Activated naive CD4-positive, alpha-beta T cell treated with anti-CD3 and anti-CD28 coated beads, Interleukin-2, amount 10 ng/mL, durations not matched to agents 7 days and 5 days (primary cell): ENCODE measurements at regions of chr11 and their contacts with region 1.

Region 1: GRCh38 chr11:119196833-119197483 is 9.2 kb upstream of the CBL start:
- DNase-seq: peak; percentile 82
- H3K4me3 Mint-ChIP-seq: no peak overlapping the region
- H3K27ac Mint-ChIP-seq: no peak overlapping the region
- H3K4me1 Mint-ChIP-seq: peaks cover 10% of the 10 kb centered on the region
- H3K27me3 Mint-ChIP-seq: peaks cover 22% of the 10 kb centered on the region

Region 2: GRCh38 chr11:119006656-119007055 is 190.3 kb before region 1 on chr11:
- CTCF ChIA-PET with region 1: no interaction called
- DNase-seq: no peak
- H3K4me3 Mint-ChIP-seq: no peak overlapping the region
- H3K27ac Mint-ChIP-seq: no peak overlapping the region
- H3K4me1 Mint-ChIP-seq: peaks cover 3% of the 10 kb centered on the region
- H3K27me3 Mint-ChIP-seq: no peaks in the 10 kb centered on the region

Region 3: DNA sequence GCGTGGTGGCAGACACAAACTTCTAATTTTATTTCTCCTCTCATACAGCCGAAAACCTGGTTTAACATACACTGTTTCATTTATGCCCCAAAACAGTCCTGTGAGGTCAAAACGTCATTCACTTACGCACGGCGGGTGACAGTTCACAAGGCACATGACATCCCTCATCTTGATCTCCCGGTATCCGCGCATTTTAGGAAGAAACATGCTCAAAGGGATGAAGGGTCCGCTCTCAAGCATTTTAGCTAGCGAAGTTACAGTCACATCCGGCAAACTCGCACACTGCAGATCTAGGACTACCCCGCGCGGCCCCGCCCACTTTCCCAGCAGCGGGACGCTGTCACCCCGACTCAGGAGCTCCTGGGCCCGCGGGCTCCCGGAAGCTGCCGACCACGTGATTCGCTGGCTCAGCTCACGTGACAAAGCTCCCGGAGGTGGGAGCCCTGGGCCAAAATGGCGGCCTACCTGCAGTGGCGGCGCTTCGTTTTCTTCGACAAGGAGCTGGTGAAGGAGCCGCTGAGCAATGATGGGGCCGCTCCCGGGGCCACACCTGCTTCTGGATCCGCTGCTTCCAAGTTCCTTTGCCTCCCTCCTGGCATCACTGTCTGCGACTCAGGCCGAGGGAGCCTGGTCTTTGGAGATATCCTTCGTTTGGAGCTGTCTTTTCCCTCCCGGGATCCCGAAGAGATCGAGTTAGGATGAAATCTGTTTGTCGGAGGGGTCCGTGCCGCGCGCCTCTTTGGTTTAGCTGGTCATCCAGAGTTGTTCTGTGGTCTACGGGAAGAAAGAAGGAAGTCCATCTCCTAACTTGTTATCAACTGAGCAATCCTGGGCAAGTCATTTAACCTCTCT is 129.4 kb before region 1 on chr11 and contains the start of gene VPS11:
- CTCF ChIA-PET with region 1: interaction called, 11 read pairs
- DNase-seq: peak; percentile 99
- H3K4me3 Mint-ChIP-seq: peak within 1 kb of the TSS; percentile 92
- H3K27ac Mint-ChIP-seq: peak within 1 kb of the TSS; percentile 98
- H3K4me1 Mint-ChIP-seq: peaks cover 49% of the 10 kb centered on the region
- H3K27me3 Mint-ChIP-seq: no peaks in the 10 kb centered on the region

Region 4: GRCh38 chr11:119108146-119108856 is 88.7 kb before region 1 on chr11:
- CTCF ChIA-PET with region 1: interaction called, 13 read pairs
- DNase-seq: peak; percentile 67
- H3K4me3 Mint-ChIP-seq: peak overlapping the region; percentile 87
- H3K27ac Mint-ChIP-seq: peak overlapping the region; percentile 85
- H3K4me1 Mint-ChIP-seq: peaks cover 62% of the 10 kb centered on the region
- H3K27me3 Mint-ChIP-seq: peaks cover 5% of the 10 kb centered on the region

Region 5: GRCh38 chr11:119168471-119169281 is 28.3 kb before region 1 on chr11 and contains the start of gene NLRX1:
- CTCF ChIA-PET with region 1: interaction called, 13 read pairs
- DNase-seq: peak; percentile 89
- H3K4me3 Mint-ChIP-seq: peak within 1 kb of the TSS; percentile 89
- H3K27ac Mint-ChIP-seq: peak within 1 kb of the TSS; percentile 93
- H3K4me1 Mint-ChIP-seq: peaks cover 27% of the 10 kb centered on the region
- H3K27me3 Mint-ChIP-seq: peaks cover under 1% of the 10 kb centered on the region

Region 6: GRCh38 chr11:119229288-119229672 is 32.3 kb after region 1 on chr11:
- CTCF ChIA-PET with region 1: no interaction called
- DNase-seq: no peak
- H3K4me3 Mint-ChIP-seq: peak overlapping the region; percentile 20
- H3K27ac Mint-ChIP-seq: peak overlapping the region; percentile 68
- H3K4me1 Mint-ChIP-seq: peaks cover 35% of the 10 kb centered on the region
- H3K27me3 Mint-ChIP-seq: no peaks in the 10 kb centered on the region

Region 7: GRCh38 chr11:119306373-119306890 is 109.5 kb after region 1 on chr11:
- CTCF ChIA-PET with region 1: interaction called, 11 read pairs
- DNase-seq: peak; percentile 46
- H3K4me3 Mint-ChIP-seq: no peak overlapping the region
- H3K27ac Mint-ChIP-seq: peak overlapping the region; percentile 83
- H3K4me1 Mint-ChIP-seq: peaks cover 32% of the 10 kb centered on the region
- H3K27me3 Mint-ChIP-seq: peaks cover 6% of the 10 kb centered on the region